Astrocyte of the cerebellum (primary cell): ENCODE measurements at regions of chr21 and their contacts with region 1.

Region 1: DNA sequence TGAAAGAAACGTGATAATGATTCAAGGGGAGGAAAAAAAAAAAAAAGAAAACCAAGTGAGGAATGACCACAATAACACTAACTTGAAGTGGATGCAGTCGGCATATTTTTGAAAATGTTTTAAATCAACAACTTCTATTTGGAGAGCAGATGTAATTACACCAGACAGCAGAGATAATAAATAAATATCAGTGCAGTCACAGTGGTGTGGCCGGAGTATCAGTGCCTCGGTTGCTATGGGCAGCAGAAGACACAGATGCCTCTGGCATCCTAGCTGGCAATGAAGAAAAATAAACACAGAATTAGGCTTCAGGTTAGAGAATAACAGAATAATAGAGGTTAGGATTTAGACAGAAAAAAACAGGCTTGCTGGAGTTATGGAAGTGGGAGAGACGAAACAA is 888.3 kb downstream of the LTN1 start:
- DNase-seq: no peak
- H3K4me3 ChIP-seq: no peak overlapping the region
- CTCF ChIP-seq: no peak

Region 2: GRCh38 chr21:28135646-28136045 is 31.3 kb after region 1 on chr21:
- in situ Hi-C with region 1: loop called (anchors 5 kb)
- DNase-seq: no peak
- H3K4me3 ChIP-seq: no peak overlapping the region
- CTCF ChIP-seq: no peak

Region 3: GRCh38 chr21:28229814-28230213 is 125.5 kb after region 1 on chr21:
- in situ Hi-C with region 1: no loop called
- DNase-seq: no peak
- H3K4me3 ChIP-seq: no peak overlapping the region
- CTCF ChIP-seq: no peak